ENCODE measurements at regions of chr11 and their contacts with region 1.

Region 1: DNA sequence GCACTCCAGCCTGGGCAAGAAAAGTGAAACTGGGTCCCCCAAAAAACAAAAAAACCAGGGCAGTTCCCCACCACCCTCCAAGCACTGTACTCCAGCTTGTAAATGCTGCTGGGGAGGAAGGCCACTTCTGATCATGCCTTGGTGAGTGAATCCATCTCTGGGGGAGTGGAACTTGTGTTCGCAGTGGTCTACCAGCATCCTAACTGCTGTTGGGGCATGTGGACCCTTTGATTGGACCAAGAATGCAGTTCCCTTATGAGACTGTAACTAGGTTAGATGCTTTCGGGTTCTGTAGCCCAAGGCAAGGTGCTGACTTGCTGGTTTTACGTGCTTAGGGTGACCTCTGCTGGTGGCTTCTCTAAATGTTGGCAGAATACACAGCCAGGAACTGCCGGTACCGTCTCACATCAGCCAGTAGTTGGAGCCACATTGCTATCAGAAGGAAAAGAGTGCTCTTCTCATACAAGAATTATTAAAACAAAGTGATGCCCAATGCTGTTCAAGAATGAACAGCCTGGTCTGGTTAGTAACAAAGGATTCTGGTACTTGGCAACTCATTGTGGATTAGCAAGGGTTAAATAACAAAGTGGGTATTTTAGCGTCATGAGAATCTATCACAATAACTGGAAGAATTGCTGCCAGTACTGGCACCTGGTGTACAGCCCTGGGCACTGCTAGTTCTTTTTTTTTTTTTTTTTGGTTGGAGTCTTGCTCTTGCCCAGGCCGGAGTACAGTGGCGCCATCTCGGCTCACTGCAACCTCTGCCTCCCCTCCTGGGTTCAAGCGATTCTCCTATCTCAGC is 13.0 kb downstream of the EIF1AD start:
- DNase-seq: peak; percentile 93 to 94
- H3K4me3 ChIP-seq: no peak overlapping the region
- H3K4me1 ChIP-seq: no peaks in the 10 kb centered on the region
- H3K27me3 ChIP-seq: no peaks in the 10 kb centered on the region

Region 2: GRCh38 chr11:65454696-65455456 is 534.1 kb before region 1 on chr11:
- in situ Hi-C with region 1: no loop called
- DNase-seq: peak; percentile 76 to 92
- H3K4me3 ChIP-seq: peak overlapping the region; percentile 32
- H3K4me1 ChIP-seq: peaks cover 20% of the 10 kb centered on the region
- H3K27me3 ChIP-seq: no peaks in the 10 kb centered on the region

Region 3: DNA sequence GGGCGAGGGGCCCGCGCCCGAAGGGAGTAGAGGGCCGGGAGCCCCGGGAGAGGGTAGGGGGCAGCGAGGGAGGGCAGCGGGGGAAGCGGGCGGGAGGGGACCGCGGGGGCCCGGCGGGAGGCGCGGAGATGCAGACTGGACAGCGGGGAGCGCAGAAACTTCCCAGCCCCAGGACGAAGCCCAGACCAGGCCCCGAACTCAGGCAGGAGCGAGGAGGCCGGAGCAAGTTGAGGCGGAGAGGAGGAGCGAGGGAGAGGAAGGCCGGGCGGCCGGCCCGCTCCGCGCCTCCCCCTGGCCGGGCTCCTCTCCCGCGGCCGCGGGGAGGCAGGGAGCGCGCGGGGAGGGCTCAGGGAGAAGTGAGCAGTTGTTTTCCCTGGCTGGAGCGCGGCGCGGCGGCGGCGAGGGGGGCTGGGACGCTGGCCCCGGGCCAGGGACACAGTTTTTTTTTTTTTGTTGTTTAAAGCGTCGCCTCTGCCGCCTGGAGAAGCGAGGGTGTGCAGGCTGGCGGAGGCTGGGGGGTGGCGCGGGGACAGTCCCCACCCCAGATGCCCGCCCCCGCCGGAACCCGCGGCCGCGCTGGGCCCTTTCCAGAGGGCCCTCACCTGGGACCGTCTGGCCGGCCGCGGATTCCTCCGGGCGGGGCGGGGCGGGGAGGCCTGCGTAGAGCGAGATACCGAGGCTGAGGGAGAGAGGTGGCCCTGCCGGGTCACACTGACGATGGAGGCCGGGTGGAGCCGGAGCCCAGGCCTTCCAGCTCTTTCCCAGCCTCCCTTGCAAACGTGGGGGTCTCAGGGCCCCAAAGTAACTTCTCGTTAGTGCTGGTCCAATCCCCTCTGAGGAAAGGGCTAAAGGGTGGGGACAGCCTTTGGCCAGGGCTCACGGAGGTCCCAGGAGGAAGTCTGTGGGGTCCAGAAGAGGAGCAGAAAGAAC is 430.7 kb before region 1 on chr11 and contains the start of gene LTBP3:
- in situ Hi-C with region 1: no loop called
- DNase-seq: peak; percentile 42 to 81
- H3K4me3 ChIP-seq: peak within 1 kb of the TSS; percentile 42
- H3K4me1 ChIP-seq: peaks cover 17% of the 10 kb centered on the region
- H3K27me3 ChIP-seq: no peaks in the 10 kb centered on the region

Region 4: DNA sequence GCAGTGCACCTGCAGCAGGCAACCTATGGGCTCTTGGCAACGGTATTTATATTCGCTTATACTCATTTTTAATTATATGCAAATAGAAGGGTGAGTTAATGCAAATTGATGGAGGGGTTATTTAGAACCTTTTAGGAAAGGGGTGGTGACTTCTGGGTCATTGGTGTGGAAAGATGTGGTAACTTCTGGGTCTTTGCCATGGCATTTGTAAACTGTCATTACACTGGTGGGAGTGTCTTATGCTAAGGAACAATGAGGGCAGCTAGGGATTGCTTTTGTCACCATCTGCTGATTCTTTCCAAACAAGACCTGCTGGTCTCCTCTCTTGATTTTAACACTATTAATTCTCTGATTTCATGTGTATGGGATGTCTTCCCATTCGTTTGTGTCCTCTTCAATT is 288.6 kb before region 1 on chr11:
- in situ Hi-C with region 1: loop called (anchors 10 kb)
- DNase-seq: no peak
- H3K4me3 ChIP-seq: no peak overlapping the region
- H3K4me1 ChIP-seq: peaks cover 18% of the 10 kb centered on the region
- H3K27me3 ChIP-seq: no peaks in the 10 kb centered on the region

Region 5: DNA sequence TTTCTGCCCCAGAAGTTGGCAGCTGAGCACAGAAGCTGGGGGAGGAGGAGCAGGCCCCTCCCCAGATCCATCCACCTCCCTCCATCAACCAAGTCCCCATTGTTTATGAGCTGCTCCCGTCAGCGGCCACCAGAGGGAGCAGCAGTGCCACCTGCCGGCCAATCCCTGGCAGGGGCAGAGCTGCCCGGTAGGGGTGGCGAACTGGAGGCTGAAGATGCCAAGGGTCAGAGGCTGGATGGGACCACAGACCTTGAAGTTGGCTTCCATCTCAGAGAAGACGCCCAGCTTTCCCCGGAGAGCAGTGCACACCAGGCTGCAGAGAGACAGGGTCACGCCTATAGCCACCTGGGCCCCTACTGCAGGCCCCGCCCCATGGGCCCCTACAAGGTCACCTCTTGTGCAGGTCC is 104.3 kb before region 1 on chr11:
- in situ Hi-C with region 1: loop called (anchors 5 kb)
- DNase-seq: peak; percentile 63 to 87
- H3K4me3 ChIP-seq: no peak overlapping the region
- H3K4me1 ChIP-seq: peaks cover 18% of the 10 kb centered on the region
- H3K27me3 ChIP-seq: no peaks in the 10 kb centered on the region

Region 6: DNA sequence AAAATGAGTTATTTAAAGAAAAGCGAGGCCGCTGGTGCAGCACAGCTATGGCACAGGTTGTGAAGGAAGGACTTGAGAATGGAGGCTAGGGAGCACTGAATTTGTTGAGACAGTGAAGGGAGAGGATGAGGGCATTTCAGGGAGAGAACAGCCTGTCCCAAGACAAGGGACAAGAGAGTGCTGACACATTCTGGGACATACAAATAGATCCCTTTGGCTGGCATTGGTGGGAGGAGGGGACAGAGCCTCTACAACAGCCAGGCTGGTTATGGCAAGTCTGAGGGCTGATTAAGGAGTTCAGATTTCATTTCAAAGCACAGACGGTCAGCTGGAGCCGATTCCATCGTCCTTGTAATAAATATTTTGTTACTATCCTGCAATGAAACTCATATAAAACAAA is 384.3 kb after region 1 on chr11:
- in situ Hi-C with region 1: no loop called
- DNase-seq: no peak
- H3K4me3 ChIP-seq: no peak overlapping the region
- H3K4me1 ChIP-seq: peaks cover 11% of the 10 kb centered on the region
- H3K27me3 ChIP-seq: no peaks in the 10 kb centered on the region

Region 7: GRCh38 chr11:66694732-66695207 is 705.8 kb after region 1 on chr11:
- in situ Hi-C with region 1: no loop called
- DNase-seq: peak; percentile 92 to 95
- H3K4me3 ChIP-seq: no peak overlapping the region
- H3K4me1 ChIP-seq: no peaks in the 10 kb centered on the region
- H3K27me3 ChIP-seq: no peaks in the 10 kb centered on the region

Measured in HAP-1 (cell line).